Caki2 (cell line): ENCODE measurements at regions of chr12 and their contacts with region 1.

Region 1: DNA sequence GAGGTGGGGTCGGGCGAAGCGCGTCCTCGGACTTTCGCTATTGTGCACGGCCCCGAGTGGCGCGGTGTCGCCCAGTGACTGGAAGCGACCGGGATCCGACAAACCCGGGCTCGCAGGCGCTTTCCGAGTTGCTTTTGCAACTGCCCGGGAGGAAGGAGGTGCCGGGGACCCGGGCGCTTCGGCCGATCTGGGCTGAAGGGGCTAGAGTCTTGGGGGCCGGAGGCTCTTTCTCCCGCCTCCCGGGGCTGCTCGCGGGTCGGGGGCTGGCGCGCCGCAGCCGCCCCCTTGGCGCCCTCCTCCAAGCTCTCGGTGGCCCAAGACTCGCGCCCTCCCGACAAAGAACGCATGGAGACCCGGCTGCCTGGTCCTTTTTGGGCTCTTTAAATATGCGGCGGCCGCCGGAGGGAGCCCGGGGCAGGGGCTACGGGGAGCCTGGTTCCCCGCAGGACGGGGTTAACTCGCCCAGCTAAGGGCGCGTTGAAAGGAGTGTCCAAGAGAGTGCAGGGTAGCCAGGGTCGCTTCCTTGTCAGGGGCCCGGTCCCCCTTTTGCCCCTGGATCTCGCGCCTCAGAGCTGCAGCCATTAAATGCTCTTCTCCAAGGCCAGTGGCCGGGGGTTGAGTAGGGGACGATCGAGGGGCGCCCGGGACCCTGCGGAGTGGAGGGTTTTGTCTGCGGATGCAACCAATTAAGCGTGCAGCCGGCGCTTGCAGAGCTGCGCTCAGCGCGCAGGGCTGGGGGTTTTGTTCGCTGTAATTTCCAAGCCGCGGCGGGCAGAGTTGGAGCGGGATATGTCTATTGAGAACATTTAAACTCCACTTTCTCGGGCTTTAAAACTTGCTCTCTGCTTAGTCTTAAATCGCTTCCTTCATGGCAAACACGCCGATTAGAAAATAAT is 1.6 kb downstream of the HMGA2 start:
- DNase-seq: peak; percentile 66

Region 2: GRCh38 chr12:65868133-65868705 is 42.4 kb after region 1 on chr12:
- in situ Hi-C with region 1: loop called (anchors 5 kb)
- DNase-seq: no peak

Region 3: GRCh38 chr12:65891987-65892481 is 66.2 kb after region 1 on chr12:
- in situ Hi-C with region 1: no loop called
- DNase-seq: peak; percentile 99